ENCODE measurements at regions of chr5 and their contacts with region 1.

Region 1: DNA sequence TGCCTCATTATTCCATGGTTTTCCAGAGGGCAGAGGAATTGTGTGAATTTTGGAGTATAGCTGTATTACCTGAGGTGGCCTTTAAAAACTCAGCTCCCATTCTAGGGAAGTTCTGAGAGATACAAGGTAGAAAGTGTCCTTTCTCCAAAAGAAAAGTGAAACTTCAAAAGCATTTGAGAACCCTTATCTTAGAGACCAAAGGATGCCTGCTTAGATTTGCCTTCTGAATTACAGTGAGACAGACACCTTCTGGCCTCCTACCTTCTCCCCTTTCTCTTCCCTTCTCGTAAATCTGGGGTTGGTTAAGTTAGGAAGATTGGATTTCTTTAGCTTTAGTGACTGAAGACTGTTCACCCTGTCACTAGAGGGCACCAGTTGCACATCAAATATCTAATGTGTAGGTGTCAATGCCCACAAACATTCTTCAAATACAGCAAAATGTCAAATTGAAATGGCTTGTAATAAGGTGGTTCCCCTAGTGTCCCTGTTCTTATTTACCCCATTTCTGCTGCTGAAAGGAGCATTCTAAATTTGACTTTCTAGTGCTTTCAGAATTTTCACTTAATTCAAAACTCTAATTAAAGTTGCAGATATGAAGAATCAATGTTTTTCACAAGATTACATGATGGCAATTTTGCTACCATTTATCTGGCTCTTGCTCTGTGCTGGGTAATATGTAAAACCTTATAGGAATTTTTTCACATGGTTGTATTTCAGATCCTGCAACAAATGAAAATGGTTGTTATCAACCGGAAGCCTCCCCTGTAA is 46.7 kb downstream of the PRRC1 start:
- DNase-seq: peak; percentile 44
- H3K4me3 ChIP-seq: no peak overlapping the region
- H3K27ac ChIP-seq: no peak overlapping the region
- H3K4me1 ChIP-seq: no peaks in the 10 kb centered on the region
- H3K27me3 ChIP-seq: no peaks in the 10 kb centered on the region
- CTCF ChIP-seq: peak; percentile 62 to 73

Region 2: DNA sequence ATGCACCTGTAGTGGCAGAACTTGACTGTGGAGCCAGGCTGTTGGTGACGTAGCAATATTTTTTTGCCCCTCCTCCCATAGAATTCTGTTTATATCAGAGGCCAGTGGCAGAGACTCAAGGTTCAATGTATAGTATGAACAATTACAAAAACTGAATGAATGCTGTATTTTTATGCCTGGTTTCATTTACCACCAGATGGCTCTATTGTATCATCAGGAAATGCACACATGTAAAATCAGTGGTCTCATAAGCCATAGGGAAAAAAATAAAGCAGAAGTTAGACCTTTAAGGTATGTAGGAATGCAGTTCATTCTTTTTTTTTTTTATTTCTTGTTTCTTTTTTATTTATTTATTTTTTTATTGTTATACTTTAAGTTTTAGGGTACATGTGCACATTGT is 182.6 kb after region 1 on chr5:
- CTCF ChIA-PET with region 1: no interaction called
- dilution Hi-C with region 1: no loop called
- in situ Hi-C with region 1: no loop called
- intact Hi-C with region 1: loop called (anchors 1 kb)
- DNase-seq: no peak
- H3K4me3 ChIP-seq: no peak overlapping the region
- H3K27ac ChIP-seq: no peak overlapping the region
- H3K4me1 ChIP-seq: no peaks in the 10 kb centered on the region
- H3K27me3 ChIP-seq: peaks cover 3% of the 10 kb centered on the region
- CTCF ChIP-seq: peak; percentile 55 to 59